ENCODE measurements at regions of chr15 and their contacts with region 1.

Region 1: GRCh38 chr15:59051873-59052861 is 52.8 kb upstream of the CCNB2 start:
- DNase-seq: no peak
- CTCF ChIP-seq: no peak

Region 2: DNA sequence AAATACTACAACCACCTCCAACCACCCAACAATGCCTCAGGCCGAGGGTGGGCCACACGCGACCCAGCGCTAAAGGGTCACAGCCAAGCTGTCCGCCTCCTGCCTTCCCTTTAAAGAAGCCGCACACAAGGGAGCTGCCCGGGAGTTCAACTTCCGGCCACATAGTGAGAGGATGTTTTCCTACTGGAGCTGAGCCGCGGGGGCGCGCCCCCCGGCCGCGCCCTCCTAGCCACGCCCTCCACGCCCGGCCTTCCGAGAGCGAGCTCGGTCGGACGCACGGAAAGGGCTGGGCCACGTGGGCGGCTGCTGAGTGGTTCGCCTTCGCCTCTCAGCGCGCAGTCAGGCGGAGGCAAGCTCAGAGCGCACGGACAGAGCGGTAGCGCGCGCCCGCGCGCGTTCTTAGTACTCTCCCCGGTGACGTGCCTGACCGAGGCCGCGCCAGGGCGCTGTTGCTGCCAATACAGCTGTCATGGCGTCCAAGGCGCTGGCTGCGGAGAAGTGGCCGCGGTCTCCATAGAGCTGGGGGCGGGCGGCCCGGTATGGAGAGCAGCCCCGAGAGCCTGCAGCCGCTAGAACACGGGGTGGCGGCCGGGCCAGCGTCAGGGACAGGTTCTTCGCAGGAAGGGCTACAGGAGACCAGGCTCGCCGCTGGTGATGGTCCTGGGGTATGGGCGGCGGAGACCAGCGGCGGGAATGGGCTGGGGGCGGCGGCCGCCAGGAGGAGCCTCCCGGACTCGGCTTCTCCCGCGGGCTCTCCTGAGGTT is 281.1 kb before region 1 on chr15 and contains the start of gene MINDY2:
- CTCF ChIA-PET with region 1: no interaction called
- POLR2A ChIA-PET with region 1: no interaction called
- DNase-seq: peak; percentile 96
- CTCF ChIP-seq: peak; percentile 42

Region 3: GRCh38 chr15:58918239-58918638 is 133.9 kb before region 1 on chr15:
- CTCF ChIA-PET with region 1: no interaction called
- POLR2A ChIA-PET with region 1: interaction called, 11 read pairs
- DNase-seq: no peak
- CTCF ChIP-seq: no peak

Region 4: DNA sequence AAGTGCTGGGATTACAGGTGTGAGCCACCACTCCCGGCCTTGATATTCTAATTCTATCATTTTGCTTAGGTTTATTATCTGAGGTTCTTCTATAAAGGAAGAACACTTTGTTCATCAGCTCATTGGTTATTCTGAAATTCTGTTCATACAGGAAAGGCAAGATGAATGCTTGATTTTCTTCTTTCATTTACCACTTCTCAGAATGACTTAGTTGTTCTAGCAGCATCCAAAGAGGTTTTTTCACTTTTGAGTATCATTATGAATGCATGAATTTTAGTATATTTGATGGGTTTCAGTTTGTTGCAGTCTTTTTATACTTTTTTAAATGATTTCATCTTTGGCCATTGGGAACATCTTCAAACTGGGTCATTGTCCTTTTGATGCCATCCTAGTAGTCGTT is 12.9 kb before region 1 on chr15:
- CTCF ChIA-PET with region 1: interaction called, 11 read pairs
- POLR2A ChIA-PET with region 1: no interaction called
- DNase-seq: no peak
- CTCF ChIP-seq: no peak

Region 5: GRCh38 chr15:59255647-59256380 is 203.6 kb after region 1 on chr15:
- CTCF ChIA-PET with region 1: no interaction called
- POLR2A ChIA-PET with region 1: no interaction called
- DNase-seq: no peak
- CTCF ChIP-seq: no peak

Region 6: GRCh38 chr15:61038387-61038786 is 1986.2 kb after region 1 on chr15:
- CTCF ChIA-PET with region 1: no interaction called
- POLR2A ChIA-PET with region 1: no interaction called
- DNase-seq: no peak
- CTCF ChIP-seq: no peak

Measured in GM10248 (cell line).